B cell (primary cell): ENCODE measurements at regions of chr1 and their contacts with region 1.

Region 1: DNA sequence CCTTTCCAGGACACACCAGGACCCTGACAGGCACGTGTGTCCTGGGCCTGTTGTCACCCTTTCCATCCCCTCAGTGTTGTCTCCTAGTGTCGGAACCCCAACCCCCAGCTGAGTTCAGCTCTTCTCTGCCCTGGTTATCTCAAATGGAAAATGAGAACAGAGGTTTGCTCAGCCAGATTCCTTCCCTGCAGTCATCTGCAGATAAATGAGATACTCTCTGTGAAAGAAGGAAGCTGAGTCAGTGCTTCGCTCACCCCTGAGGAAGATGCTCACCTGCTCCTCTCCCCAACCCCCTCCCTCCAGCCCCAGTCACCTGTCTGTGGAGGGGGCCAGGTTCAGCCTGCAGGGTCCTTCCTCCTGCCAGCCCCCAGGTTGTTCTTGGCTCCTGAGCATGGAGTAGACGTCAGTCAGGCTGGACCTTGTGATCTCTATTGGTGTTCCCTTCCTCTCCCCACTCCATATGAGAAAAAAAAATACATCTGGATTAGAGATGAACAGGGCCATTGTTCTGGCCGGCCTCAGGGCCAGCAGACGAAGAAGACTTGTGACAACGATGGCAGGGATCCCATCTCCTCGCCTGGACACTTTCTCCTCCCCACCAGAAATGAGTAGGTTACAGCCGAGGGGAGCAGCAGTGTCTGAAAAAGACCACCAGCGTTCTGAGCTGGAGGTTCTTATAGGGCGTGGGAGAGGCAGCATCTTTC is 20.9 kb downstream of the PHGDH start:
- DNase-seq: no peak
- ATAC-seq: no peak
- H3K4me3 ChIP-seq: no peak overlapping the region
- H3K4me3 Mint-ChIP-seq: no peak overlapping the region
- H3K27ac ChIP-seq: no peak overlapping the region
- H3K27ac Mint-ChIP-seq: no peak overlapping the region
- H3K4me1 ChIP-seq: no peaks in the 10 kb centered on the region
- H3K4me1 Mint-ChIP-seq: peaks cover 5% of the 10 kb centered on the region
- H3K27me3 ChIP-seq: no peaks in the 10 kb centered on the region
- H3K27me3 Mint-ChIP-seq: no peaks in the 10 kb centered on the region
- CTCF ChIP-seq: no peak

Region 2: GRCh38 chr1:119743781-119744597 is 11.4 kb after region 1 on chr1:
- CTCF ChIA-PET with region 1: interaction called, 21 read pairs
- POLR2A ChIA-PET with region 1: no interaction called
- intact Hi-C with region 1: no loop called
- DNase-seq: peak; percentile 55
- ATAC-seq: peak; percentile 57
- H3K4me3 ChIP-seq: no peak overlapping the region
- H3K4me3 Mint-ChIP-seq: no peak overlapping the region
- H3K27ac ChIP-seq: no peak overlapping the region
- H3K27ac Mint-ChIP-seq: no peak overlapping the region
- H3K4me1 ChIP-seq: peaks cover 0 to 3% of the 10 kb centered on the region in 2 donors
- H3K4me1 Mint-ChIP-seq: peaks cover 4% of the 10 kb centered on the region
- H3K27me3 ChIP-seq: no peaks in the 10 kb centered on the region
- H3K27me3 Mint-ChIP-seq: peaks cover 6% of the 10 kb centered on the region
- CTCF ChIP-seq: peak; percentile 87